ENCODE measurements at regions of chr5 and their contacts with region 1.

Region 1: GRCh38 chr5:56350598-56351170 is 117.6 kb upstream of the ANKRD55 start:
- DNase-seq: peak; percentile 98
- H3K4me3 ChIP-seq: no peak overlapping the region
- H3K27ac ChIP-seq: peak overlapping the region; percentile 92
- H3K4me1 ChIP-seq: peaks cover 28% of the 10 kb centered on the region
- H3K27me3 ChIP-seq: no peaks in the 10 kb centered on the region
- CTCF ChIP-seq: no peak
- POLR2A ChIP-seq: no peak

Region 2: DNA sequence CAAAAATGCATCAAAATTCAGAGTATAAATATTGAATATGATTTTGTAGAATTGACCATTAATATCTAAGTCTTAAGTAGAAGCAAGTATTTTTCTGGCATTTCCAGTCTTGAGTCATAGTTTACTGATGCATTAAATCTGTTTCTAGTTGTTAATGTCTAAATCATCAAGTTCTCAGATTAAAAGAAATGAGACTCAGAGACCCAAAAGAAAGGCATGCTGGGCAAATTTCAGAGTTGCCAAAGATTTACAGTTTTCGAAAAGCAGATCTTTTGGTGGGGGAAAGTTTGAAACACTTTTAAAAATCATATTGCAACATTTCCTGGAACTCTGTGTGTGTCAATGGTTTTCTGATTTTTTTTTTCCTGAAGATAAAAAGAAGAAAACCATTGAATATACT is 178.5 kb before region 1 on chr5:
- CTCF ChIA-PET with region 1: no interaction called
- POLR2A ChIA-PET with region 1: no interaction called
- dilution Hi-C with region 1: no loop called
- intact Hi-C with region 1: no loop called
- DNase-seq: peak; percentile 33
- H3K4me3 ChIP-seq: no peak overlapping the region
- H3K27ac ChIP-seq: no peak overlapping the region
- H3K4me1 ChIP-seq: peaks cover 62% of the 10 kb centered on the region
- H3K27me3 ChIP-seq: no peaks in the 10 kb centered on the region
- CTCF ChIP-seq: no peak
- POLR2A ChIP-seq: no peak

Region 3: DNA sequence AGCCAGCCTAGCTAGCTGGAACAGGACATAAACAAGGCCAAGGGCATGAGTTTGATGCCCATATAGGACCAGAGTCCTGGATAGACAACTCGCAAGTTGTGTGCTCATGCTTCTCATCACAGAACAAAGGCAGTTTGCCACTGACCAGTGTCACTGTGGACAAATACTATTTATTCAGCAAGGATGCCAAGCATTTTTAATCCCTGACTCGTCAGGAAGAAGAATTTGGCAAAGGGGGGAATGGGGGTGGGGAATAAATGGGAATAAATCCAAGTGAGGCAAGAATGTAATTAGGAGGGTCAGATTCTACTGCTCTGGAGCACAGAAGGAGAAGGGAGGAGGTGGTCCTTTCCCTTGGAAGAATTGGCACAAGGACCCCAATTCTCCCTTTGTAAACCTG is 70.7 kb before region 1 on chr5:
- CTCF ChIA-PET with region 1: no interaction called
- POLR2A ChIA-PET with region 1: interaction called, 3 read pairs
- dilution Hi-C with region 1: no loop called
- intact Hi-C with region 1: loop called (anchors 1 kb)
- DNase-seq: peak; percentile 80
- H3K4me3 ChIP-seq: no peak overlapping the region
- H3K27ac ChIP-seq: peak overlapping the region; percentile 92
- H3K4me1 ChIP-seq: peaks cover 45% of the 10 kb centered on the region
- H3K27me3 ChIP-seq: no peaks in the 10 kb centered on the region
- CTCF ChIP-seq: no peak
- POLR2A ChIP-seq: no peak

Region 4: DNA sequence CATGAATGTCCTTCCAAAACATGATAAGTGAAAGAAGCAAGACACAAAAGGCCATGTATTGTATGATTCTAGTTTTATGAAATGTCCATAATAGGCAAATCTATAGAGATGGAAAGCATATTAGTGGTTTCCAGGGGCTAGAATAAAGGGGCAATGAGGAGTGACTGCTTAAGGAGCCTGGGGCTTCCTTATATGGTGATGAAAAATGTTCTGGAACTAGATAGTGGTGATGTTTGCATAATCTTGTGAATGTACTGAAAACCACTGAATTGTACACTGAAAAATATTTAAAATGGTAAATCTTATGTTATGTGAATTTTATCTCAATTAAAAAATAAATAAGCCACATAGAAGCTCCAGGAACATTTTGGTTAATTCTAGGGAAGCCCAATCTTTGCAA is 26.9 kb after region 1 on chr5:
- CTCF ChIA-PET with region 1: no interaction called
- POLR2A ChIA-PET with region 1: no interaction called
- dilution Hi-C with region 1: no loop called
- intact Hi-C with region 1: no loop called
- DNase-seq: no peak
- H3K4me3 ChIP-seq: no peak overlapping the region
- H3K27ac ChIP-seq: no peak overlapping the region
- H3K4me1 ChIP-seq: no peaks in the 10 kb centered on the region
- H3K27me3 ChIP-seq: peaks cover 0 to 2% of the 10 kb centered on the region in 2 experiments
- CTCF ChIP-seq: no peak
- POLR2A ChIP-seq: no peak

Region 5: DNA sequence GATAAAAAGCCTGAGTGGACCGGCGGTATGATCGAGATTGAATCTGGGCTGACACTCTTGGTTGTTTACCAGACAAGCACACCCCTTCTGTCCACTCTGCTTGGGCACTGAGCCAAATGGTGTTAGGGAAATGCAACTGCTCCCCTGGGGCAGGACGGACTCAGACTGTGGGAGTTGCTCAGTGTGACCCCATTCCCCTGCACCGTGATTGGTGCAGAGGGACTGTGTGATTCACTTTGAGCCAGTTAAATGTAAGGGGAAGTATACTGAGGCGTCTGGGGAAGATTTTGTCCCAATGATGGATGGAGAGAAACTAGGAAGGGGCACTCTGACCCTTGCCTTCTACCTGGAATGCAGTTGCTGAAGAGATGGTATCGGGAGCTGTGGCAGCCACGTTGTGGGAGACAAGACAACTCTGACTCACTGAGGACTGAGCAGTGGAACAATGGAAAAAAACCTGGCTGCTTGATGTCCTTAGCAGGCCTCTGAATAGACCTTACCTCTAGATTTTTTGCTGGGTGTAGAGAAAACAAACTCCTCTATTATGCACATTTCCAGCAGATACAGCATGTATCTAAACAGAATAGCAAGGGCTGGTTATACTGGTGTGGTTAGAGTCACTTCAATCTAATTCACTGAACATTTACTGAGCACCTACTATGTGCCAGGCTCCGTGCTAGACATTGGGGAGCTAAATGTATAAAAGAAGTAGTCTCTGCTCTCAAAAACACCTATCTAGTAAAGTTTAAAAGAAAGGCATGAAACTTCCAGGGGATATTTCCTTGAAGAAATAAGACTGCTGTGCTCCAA is 78.6 kb after region 1 on chr5:
- CTCF ChIA-PET with region 1: no interaction called
- POLR2A ChIA-PET with region 1: no interaction called
- dilution Hi-C with region 1: no loop called
- intact Hi-C with region 1: no loop called
- DNase-seq: no peak
- H3K4me3 ChIP-seq: no peak overlapping the region
- H3K27ac ChIP-seq: no peak overlapping the region
- H3K4me1 ChIP-seq: no peaks in the 10 kb centered on the region
- H3K27me3 ChIP-seq: peaks cover 0 to 7% of the 10 kb centered on the region in 2 experiments
- CTCF ChIP-seq: no peak
- POLR2A ChIP-seq: no peak

Region 6: GRCh38 chr5:56481428-56482357 is 131.0 kb after region 1 on chr5:
- CTCF ChIA-PET with region 1: no interaction called
- POLR2A ChIA-PET with region 1: no interaction called
- dilution Hi-C with region 1: no loop called
- intact Hi-C with region 1: loop called (anchors 1 kb)
- DNase-seq: peak; percentile 53
- H3K4me3 ChIP-seq: peak overlapping the region; percentile 44 to 88 (median 87)
- H3K27ac ChIP-seq: peak overlapping the region; percentile 32
- H3K4me1 ChIP-seq: peaks cover 12% of the 10 kb centered on the region
- H3K27me3 ChIP-seq: no peaks in the 10 kb centered on the region
- CTCF ChIP-seq: peak; percentile 16 to 63
- POLR2A ChIP-seq: no peak

Measured in endothelial cell of umbilical vein (primary cell).